ENCODE measurements at regions of chr4 and their contacts with region 1.

Region 1: DNA sequence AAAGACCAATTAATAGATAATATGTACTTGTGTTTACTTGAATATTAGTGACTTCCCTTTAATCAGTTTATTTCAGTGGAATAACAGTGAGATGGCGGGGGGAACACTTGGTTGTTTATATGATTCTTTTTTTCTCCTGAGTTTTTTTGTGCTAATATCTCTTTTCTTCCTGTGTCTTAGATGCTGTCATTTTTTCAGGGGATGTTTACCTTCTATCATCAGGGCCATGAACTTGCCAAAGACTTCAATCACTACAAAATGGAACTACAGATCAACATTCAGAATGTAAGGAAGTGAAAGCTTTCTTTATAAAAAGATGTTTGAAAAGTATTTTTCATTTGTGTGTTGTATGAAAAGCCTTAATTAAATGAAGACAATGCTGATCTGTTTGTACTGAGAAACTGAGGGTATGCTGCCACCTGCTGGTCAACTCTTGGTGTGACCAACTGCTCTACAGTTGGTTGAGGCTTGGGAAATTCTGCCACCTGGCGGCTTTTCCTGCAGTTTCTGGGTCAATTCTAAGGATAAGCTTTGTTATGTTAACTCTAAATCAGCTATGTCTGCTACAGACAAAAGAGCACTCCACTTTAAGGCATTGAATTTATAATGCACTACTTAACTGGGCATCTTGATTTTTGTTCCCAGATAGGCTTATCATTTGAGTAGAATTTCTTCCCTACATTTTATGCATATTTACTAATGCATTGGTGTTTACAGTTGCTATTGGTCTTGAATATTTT is 134.8 kb downstream of the ARHGAP10 start:
- DNase-seq: peak; percentile 85 to 97 (median 92)
- ATAC-seq: peak; percentile 99
- H3K4me3 ChIP-seq: no peak overlapping the region
- H3K4me3 Mint-ChIP-seq: no peak overlapping the region
- H3K27ac ChIP-seq: no peak overlapping the region
- H3K27ac Mint-ChIP-seq: no peak overlapping the region
- H3K4me1 ChIP-seq: no peaks in the 10 kb centered on the region
- H3K4me1 Mint-ChIP-seq: no peaks in the 10 kb centered on the region
- H3K27me3 ChIP-seq: no peaks in the 10 kb centered on the region
- H3K27me3 Mint-ChIP-seq: no peaks in the 10 kb centered on the region
- CTCF ChIP-seq: peak; percentile 99

Region 2: GRCh38 chr4:147518846-147519767 is 347.6 kb before region 1 on chr4:
- CTCF ChIA-PET with region 1: interaction called, 9 read pairs
- POLR2A ChIA-PET with region 1: no interaction called
- intact Hi-C with region 1: loop called (anchors 1 kb)
- DNase-seq: peak in 7 of 9 experiments; percentile 5 to 66 (median 47)
- ATAC-seq: peak; percentile 74
- H3K4me3 ChIP-seq: no peak overlapping the region
- H3K4me3 Mint-ChIP-seq: no peak overlapping the region
- H3K27ac ChIP-seq: no peak overlapping the region
- H3K27ac Mint-ChIP-seq: no peak overlapping the region
- H3K4me1 ChIP-seq: no peaks in the 10 kb centered on the region
- H3K4me1 Mint-ChIP-seq: no peaks in the 10 kb centered on the region
- H3K27me3 ChIP-seq: no peaks in the 10 kb centered on the region
- H3K27me3 Mint-ChIP-seq: peaks cover 16% of the 10 kb centered on the region
- CTCF ChIP-seq: peak; percentile 76

Region 3: GRCh38 chr4:147683717-147684700 is 182.7 kb before region 1 on chr4 and contains the start of gene PRMT9:
- CTCF ChIA-PET with region 1: interaction called, 19 read pairs
- POLR2A ChIA-PET with region 1: interaction called, 10 read pairs
- intact Hi-C with region 1: no loop called
- DNase-seq: peak; percentile 74 to 94 (median 88)
- ATAC-seq: peak; percentile 97
- H3K4me3 ChIP-seq: peak within 1 kb of the TSS; percentile 68 to 98
- H3K4me3 Mint-ChIP-seq: peak within 1 kb of the TSS; percentile 98
- H3K27ac ChIP-seq: peak within 1 kb of the TSS; percentile 92 to 98
- H3K27ac Mint-ChIP-seq: peak within 1 kb of the TSS; percentile 99
- H3K4me1 ChIP-seq: peaks cover 11% of the 10 kb centered on the region
- H3K4me1 Mint-ChIP-seq: peaks cover 40% of the 10 kb centered on the region
- H3K27me3 ChIP-seq: no peaks in the 10 kb centered on the region
- H3K27me3 Mint-ChIP-seq: peaks cover 8% of the 10 kb centered on the region
- CTCF ChIP-seq: no peak
- total RNA-seq, gene PRMT9: 36.4 to 40.3 TPM

Region 4: DNA sequence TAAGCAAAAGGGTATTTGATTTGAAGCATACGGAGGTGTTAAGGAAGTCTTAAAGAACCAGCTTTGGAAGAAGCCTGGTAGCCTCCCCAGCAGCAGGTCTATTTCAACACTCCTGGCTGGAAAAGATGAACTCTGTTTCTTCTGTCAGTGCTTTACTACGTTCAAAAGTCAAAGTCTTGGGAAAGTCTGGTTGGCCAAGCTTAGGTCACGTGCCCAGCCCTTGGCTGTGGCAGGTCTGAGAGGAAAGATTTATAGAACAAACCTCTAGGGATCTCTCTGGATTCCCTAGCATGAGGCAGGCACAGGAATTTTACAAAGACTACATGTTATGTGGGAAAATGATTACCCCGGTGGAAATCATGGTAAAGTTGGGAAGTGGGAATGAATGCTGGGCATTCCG is 143.4 kb before region 1 on chr4:
- CTCF ChIA-PET with region 1: interaction called, 49 read pairs
- POLR2A ChIA-PET with region 1: no interaction called
- intact Hi-C with region 1: no loop called
- DNase-seq: no peak
- ATAC-seq: no peak
- H3K4me3 ChIP-seq: no peak overlapping the region
- H3K4me3 Mint-ChIP-seq: no peak overlapping the region
- H3K27ac ChIP-seq: no peak overlapping the region
- H3K27ac Mint-ChIP-seq: no peak overlapping the region
- H3K4me1 ChIP-seq: no peaks in the 10 kb centered on the region
- H3K4me1 Mint-ChIP-seq: no peaks in the 10 kb centered on the region
- H3K27me3 ChIP-seq: no peaks in the 10 kb centered on the region
- H3K27me3 Mint-ChIP-seq: peaks cover 2% of the 10 kb centered on the region
- CTCF ChIP-seq: no peak

Region 5: GRCh38 chr4:147813109-147813773 is 53.5 kb before region 1 on chr4:
- CTCF ChIA-PET with region 1: interaction called, 16 read pairs
- POLR2A ChIA-PET with region 1: no interaction called
- intact Hi-C with region 1: no loop called
- DNase-seq: no peak
- ATAC-seq: no peak
- H3K4me3 ChIP-seq: no peak overlapping the region
- H3K4me3 Mint-ChIP-seq: no peak overlapping the region
- H3K27ac ChIP-seq: no peak overlapping the region
- H3K27ac Mint-ChIP-seq: no peak overlapping the region
- H3K4me1 ChIP-seq: peaks cover 4% of the 10 kb centered on the region
- H3K4me1 Mint-ChIP-seq: peaks cover 13% of the 10 kb centered on the region
- H3K27me3 ChIP-seq: no peaks in the 10 kb centered on the region
- H3K27me3 Mint-ChIP-seq: no peaks in the 10 kb centered on the region
- CTCF ChIP-seq: no peak

Region 6: DNA sequence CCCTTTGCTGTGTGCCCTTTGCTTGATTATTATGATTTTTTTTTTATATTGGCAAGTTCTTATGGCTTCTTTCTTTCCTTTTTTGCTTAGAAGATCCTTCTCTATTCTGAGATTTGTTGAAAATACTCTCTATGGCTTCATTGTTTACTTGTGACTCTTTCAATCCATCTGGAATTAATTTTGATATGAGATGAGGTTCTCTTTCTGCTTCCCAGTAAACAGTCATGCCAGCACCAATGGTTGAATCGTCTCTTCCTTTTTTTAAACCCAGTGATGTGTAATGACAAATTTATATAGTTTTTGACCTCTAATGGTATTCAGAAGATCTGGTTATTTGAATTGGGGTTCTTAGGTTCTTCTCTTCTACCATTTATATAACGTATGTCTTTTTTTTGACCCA is 13.0 kb before region 1 on chr4:
- CTCF ChIA-PET with region 1: interaction called, 55 read pairs
- POLR2A ChIA-PET with region 1: interaction called, 4 read pairs
- intact Hi-C with region 1: no loop called
- DNase-seq: no peak
- ATAC-seq: no peak
- H3K4me3 ChIP-seq: no peak overlapping the region
- H3K4me3 Mint-ChIP-seq: no peak overlapping the region
- H3K27ac ChIP-seq: no peak overlapping the region
- H3K27ac Mint-ChIP-seq: no peak overlapping the region
- H3K4me1 ChIP-seq: no peaks in the 10 kb centered on the region
- H3K4me1 Mint-ChIP-seq: no peaks in the 10 kb centered on the region
- H3K27me3 ChIP-seq: no peaks in the 10 kb centered on the region
- H3K27me3 Mint-ChIP-seq: no peaks in the 10 kb centered on the region
- CTCF ChIP-seq: no peak

Measured in CD8-positive, alpha-beta T cell (primary cell).